K562 (cell line): ENCODE measurements at regions of chr6 and their contacts with region 1.

Region 1: GRCh38 chr6:25717866-25718740 is 36.4 kb upstream of the SLC17A4 start:
- DNase-seq: peak; percentile 35 to 54 (median 48)
- ATAC-seq: peak; percentile 59; the same call in 2 of the 3 replicates
- H3K4me3 ChIP-seq: no peak overlapping the region
- H3K27ac ChIP-seq: no peak overlapping the region
- H3K4me1 ChIP-seq: no peaks in the 10 kb centered on the region
- H3K27me3 ChIP-seq: peaks cover 2 to 7% of the 10 kb centered on the region in 2 experiments; a peak in 2 of 5 replicates
- CTCF ChIP-seq: peak; percentile 52 to 75 (median 53); a peak in 5 of 6 replicates
- EP300 ChIP-seq: no peak
- POLR2A ChIP-seq: no peak
- RAD21 ChIP-seq: peak; percentile 74 to 79

Region 2: DNA sequence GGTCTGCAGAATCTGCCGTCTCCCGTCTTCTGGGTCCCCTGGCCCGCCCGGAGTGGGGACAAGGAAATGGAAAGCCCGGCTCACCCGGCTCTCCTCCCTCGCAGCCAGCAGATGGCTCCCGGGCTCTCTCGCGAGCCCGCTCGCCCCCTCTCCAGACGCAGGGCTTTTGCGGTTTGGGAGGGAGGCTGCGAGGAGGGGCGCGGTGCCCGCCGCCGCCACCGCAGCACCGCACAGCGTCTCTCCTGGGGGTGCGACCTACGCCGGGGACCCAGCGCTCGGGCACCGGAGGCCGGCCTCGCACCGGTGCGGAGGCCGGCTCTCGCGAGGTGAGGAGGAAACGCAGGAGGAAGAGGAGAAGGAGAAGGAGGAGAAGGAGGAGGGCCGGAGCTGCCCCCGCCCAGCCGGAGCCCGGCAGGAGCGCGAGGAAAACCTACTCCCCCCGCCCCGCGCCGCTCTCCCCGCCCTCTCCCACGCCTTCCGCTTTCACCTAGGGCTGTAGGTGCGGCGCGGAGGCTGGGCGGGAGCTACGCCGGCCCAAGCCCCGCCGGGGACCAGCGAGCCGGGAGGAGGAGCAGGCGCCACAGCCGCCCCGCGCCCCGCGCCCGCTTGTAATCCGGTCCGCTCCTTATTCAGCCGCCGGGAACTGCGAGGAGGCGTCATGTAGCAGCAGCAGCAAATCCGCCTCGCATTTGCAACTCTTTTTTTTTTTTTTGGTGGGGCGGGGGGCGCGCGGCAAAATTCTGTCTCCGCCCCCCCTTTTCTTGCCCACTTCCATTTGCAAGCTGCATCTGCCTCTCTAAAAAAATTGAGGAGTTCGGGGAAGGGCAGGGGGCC is 439.0 kb before region 1 on chr6 and contains the start of gene CARMIL1:
- CTCF ChIA-PET with region 1: no interaction called
- POLR2A ChIA-PET with region 1: no interaction called
- in situ Hi-C with region 1: no loop called
- intact Hi-C with region 1: loop called (anchors 10 kb)
- DNase-seq: peak; percentile 80 to 92 (median 90)
- ATAC-seq: peak; percentile 97
- H3K4me3 ChIP-seq: peak within 1 kb of the TSS; percentile 60
- H3K27ac ChIP-seq: no peak within 1 kb of the TSS
- H3K4me1 ChIP-seq: peaks cover 2 to 17% of the 10 kb centered on the region in 2 experiments; a peak in 2 of 5 replicates
- H3K27me3 ChIP-seq: peaks cover 4 to 26% of the 10 kb centered on the region in 2 experiments; a peak in 4 of 5 replicates
- CTCF ChIP-seq: peak; percentile 70 to 85 (median 70)
- EP300 ChIP-seq: no peak
- POLR2A ChIP-seq: no peak
- RAD21 ChIP-seq: peak; percentile 78
- polyA plus RNA-seq, gene CARMIL1: 0.08 TPM in 1 of 2 experiments, not detected in the other

Region 3: GRCh38 chr6:25537349-25538018 is 180.6 kb before region 1 on chr6:
- CTCF ChIA-PET with region 1: no interaction called
- POLR2A ChIA-PET with region 1: no interaction called
- in situ Hi-C with region 1: no loop called
- intact Hi-C with region 1: no loop called
- DNase-seq: no peak
- ATAC-seq: no peak
- H3K4me3 ChIP-seq: no peak overlapping the region
- H3K27ac ChIP-seq: no peak overlapping the region
- H3K4me1 ChIP-seq: peaks cover 0 to 16% of the 10 kb centered on the region in 2 experiments; a peak in 2 of 5 replicates
- H3K27me3 ChIP-seq: peaks cover 0 to 11% of the 10 kb centered on the region in 2 experiments; a peak in 1 of 5 replicates
- CTCF ChIP-seq: no peak
- EP300 ChIP-seq: no peak
- POLR2A ChIP-seq: no peak
- RAD21 ChIP-seq: no peak

Region 4: DNA sequence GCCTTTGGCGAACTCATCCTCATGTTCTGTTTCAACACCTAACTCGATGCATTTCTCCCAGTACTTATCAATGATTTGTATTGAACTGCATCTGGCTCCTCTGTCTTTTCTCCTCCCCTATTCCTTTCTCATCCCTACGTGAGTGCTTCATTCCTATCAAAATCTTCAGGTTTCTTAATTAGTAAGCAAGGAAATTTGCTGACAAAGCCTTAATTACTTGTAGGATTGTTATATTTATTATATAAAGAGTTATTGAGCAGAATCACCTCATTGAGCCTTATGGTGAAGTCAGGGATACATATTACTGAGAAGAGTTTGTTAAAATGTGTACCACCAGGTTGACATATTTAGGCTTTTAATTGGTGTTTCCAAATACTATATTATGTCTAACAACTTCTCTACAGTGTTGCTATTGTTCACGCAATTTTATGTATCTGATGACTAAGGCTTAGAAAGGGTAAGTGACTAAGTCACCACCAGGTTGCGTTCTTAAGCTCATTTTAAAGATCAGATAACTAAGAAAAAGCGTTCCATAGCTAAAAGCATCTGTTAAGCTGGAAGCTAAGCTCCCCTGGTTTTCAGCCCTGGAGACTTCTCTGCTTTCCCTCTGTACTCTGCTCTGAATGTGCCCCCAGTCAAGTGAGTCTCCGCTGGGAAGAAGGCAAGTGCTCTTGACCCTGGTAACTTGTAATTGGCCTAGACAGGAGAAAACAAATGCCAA is 47.1 kb before region 1 on chr6:
- CTCF ChIA-PET with region 1: no interaction called
- POLR2A ChIA-PET with region 1: no interaction called
- in situ Hi-C with region 1: no loop called
- intact Hi-C with region 1: loop called (anchors 5 kb)
- DNase-seq: no peak
- ATAC-seq: peak; percentile 64; the same call in 2 of the 3 replicates
- H3K4me3 ChIP-seq: no peak overlapping the region
- H3K27ac ChIP-seq: no peak overlapping the region
- H3K4me1 ChIP-seq: no peaks in the 10 kb centered on the region
- H3K27me3 ChIP-seq: peaks cover 0 to 4% of the 10 kb centered on the region in 2 experiments; a peak in 2 of 5 replicates
- CTCF ChIP-seq: peak in 2 of 3 experiments; percentile 4 to 38; a peak in 3 of 6 replicates
- EP300 ChIP-seq: no peak
- POLR2A ChIP-seq: no peak
- RAD21 ChIP-seq: peak; percentile 45 to 63; a peak in 3 of 4 replicates